ENCODE measurements at regions of chr6 and their contacts with region 1.

Region 1: DNA sequence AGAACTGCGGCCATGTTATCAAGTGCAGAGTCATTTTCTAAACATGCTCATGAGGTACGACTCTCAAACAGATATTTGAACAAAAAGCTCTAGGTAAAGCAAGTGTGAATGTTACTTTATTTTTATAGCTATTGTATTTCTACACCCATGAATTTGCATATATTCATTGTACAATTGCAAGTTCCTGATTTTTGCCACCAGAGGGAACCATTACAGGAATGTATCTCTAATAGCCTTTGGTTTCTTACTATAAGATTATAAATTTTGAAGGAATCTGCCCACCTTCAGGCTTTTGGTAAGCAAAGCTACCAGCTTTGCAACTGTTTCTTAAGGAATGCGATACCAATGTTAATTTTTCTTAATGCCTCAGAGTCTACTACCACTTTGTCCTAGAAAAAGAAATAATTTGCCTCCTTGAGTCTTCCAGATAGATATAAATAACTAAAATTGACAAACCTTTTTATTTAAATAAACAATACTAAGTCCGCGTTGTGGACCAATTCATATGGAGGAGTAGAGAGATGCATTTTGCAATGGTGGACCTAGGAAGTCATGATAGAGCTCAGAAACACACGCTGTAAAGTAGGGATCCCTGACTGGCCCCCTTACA is 125.4 kb upstream of the SAMD5 start:
- DNase-seq: peak; percentile 44
- H3K4me3 ChIP-seq: no peak overlapping the region
- H3K27ac ChIP-seq: no peak overlapping the region
- H3K4me1 ChIP-seq: no peaks in the 10 kb centered on the region
- H3K27me3 ChIP-seq: no peaks in the 10 kb centered on the region
- CTCF ChIP-seq: peak; percentile 24 to 33
- POLR2A ChIP-seq: no peak

Region 2: DNA sequence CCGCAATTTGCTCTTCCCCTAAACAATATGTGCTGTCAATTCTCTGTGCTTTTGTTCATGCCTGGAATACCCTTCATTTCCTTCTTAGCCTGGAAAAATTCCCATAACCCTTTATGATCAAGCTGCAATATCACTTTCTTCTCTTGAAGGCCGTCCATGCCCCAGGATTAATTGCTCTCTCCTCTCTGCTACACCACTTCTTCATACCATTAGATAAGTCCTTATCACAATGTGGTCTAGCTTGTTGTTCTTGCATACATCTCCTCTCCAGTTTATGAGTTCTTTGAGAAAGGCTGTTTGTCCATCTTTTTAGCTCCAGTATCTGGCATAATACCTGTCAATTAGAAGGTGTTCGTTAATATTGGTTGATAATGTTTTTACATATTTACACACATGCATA is 14.3 kb after region 1 on chr6:
- CTCF ChIA-PET with region 1: interaction called, 10 read pairs
- POLR2A ChIA-PET with region 1: no interaction called
- dilution Hi-C with region 1: no loop called
- intact Hi-C with region 1: no loop called
- DNase-seq: no peak
- H3K4me3 ChIP-seq: no peak overlapping the region
- H3K27ac ChIP-seq: no peak overlapping the region
- H3K4me1 ChIP-seq: no peaks in the 10 kb centered on the region
- H3K27me3 ChIP-seq: no peaks in the 10 kb centered on the region
- CTCF ChIP-seq: no peak
- POLR2A ChIP-seq: no peak

Measured in endothelial cell of umbilical vein (primary cell).